ENCODE measurements at regions of chr5 and their contacts with region 1.

Region 1: DNA sequence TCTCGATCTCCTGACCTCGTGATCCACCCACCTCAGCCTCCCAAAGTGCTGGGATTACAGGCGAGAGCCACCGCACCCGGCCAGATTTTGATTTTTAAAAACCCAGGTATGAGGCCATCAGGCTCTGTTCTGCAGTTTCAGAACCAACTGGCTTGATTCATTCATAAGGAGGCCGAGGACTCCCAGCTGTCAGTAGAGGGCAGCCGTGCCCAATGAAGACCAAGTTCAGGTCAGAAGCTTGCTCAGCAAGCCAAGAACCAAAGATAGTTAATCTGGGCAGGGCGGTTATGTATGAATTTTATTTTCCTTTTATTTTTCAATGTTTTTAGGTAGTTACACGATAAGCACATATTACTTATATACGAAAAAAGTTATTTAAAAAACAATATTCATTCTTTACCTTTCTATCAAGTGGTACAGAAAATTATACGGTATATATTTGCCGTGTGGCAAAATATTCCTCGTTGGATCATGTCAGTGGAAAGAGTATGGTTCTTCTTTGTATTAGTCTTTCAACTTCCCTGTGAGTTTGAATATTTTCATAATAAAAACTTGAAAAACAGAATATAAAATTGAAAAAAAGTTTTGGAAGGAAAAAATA is 18.0 kb downstream of the MGAT1 start:
- DNase-seq: peak; percentile 86
- ATAC-seq: peak; percentile 75 to 77

Region 2: GRCh38 chr5:180831139-180832048 is 46.8 kb after region 1 on chr5:
- intact Hi-C with region 1: no loop called
- DNase-seq: peak; percentile 89
- ATAC-seq: peak; percentile 97 to 98

Region 3: DNA sequence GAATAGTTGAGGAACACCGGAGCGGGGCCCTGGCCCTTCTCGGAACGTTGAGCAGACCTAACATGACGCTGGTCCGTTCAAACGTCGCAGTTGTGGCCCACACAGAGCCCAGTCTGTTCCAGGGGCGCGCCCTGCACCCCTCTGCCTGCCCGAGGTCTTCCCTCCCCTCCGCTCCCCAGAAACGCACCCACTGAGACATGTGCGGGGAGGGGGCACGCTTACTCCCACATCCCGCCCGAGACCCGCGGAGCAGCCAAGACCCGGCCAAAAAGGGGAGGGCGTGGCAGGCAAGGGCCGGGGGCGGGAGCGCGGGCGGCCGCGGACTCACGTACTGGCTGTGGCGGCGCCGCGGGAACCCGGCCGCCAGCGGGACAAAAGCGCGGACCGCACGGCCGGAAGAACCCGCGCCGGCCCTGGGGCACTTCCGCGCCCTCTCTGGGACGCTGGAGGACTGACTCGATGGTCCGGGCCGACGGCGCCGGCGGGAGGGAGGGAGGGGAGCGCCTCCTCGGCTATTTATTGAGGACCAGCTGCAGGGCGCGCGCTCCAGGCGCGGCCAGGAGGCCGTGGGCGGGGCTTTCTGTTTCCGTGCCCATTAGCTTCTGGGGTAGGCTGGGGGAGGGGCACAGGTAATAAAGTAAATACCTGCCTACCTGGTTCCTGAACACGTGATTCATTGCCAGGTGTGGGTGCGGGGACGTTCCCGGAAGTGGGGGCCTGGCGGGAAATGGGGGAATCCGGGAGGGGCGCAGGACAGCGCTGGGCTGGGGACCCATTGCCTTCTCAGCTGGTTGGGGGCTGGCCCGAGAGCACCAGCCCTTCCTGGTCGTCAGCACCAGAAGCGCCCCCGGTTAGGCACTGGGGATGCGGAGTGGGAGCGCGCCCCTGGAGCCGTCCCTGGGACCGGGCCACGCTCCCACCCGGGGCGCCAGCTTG is 76.6 kb after region 1 on chr5 and contains the start of gene ZFP62:
- intact Hi-C with region 1: loop called (anchors 5 to 10 kb)
- DNase-seq: peak; percentile 95
- ATAC-seq: peak; percentile 99
- total RNA-seq, gene ZFP62: 14.4 to 16.8 TPM

Region 4: GRCh38 chr5:180868960-180869359 is 84.4 kb after region 1 on chr5:
- intact Hi-C with region 1: loop called (anchors 5 to 10 kb)
- DNase-seq: peak; percentile 85
- ATAC-seq: peak; percentile 76 to 80

Region 5: DNA sequence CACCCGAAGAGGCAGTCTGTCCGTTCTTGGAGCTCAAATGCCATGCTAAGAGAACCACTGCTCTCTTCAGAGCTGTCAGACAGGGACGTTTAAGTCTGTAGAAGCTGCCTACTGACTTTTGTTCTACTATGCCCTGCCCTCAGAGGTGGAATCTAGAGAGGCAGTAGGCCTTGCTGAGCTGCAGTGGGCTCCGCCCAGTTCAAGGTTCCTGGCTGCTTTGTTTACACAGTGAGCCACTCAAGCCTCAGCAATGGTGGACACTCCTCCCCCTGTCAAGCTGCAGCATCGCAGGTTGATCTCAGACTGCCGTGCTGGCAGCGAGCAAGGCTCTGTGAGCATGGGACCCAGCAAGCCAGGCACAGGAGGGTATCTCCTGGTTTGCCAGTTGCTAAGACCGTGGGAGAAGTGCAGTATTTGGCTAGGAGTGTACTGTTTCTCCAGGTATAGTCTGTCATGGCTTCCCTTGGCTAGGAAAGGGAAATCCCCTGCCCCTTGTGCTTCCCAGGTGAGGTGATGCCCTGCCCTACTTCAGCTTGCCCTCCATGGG is 101.3 kb after region 1 on chr5:
- intact Hi-C with region 1: no loop called
- DNase-seq: no peak
- ATAC-seq: no peak

Region 6: GRCh38 chr5:181159286-181159829 is 374.8 kb after region 1 on chr5:
- intact Hi-C with region 1: loop called in 1 of 2 experiments (anchors 10 kb)
- DNase-seq: peak; percentile 81
- ATAC-seq: peak; percentile 92